ENCODE measurements at regions of chr19 and their contacts with region 1.

Region 1: GRCh38 chr19:41206926-41207750 is 11.9 kb upstream of the AXL start:
- DNase-seq: peak; percentile 45 to 51
- ATAC-seq: peak; percentile 17

Region 2: GRCh38 chr19:41161903-41162302 is 45.2 kb before region 1 on chr19:
- intact Hi-C with region 1: no loop called
- DNase-seq: no peak
- ATAC-seq: no peak

Region 3: GRCh38 chr19:41233748-41234240 is 26.7 kb after region 1 on chr19:
- intact Hi-C with region 1: no loop called
- DNase-seq: peak in 1 of 2 donors; percentile 51
- ATAC-seq: peak; percentile 38

Region 4: DNA sequence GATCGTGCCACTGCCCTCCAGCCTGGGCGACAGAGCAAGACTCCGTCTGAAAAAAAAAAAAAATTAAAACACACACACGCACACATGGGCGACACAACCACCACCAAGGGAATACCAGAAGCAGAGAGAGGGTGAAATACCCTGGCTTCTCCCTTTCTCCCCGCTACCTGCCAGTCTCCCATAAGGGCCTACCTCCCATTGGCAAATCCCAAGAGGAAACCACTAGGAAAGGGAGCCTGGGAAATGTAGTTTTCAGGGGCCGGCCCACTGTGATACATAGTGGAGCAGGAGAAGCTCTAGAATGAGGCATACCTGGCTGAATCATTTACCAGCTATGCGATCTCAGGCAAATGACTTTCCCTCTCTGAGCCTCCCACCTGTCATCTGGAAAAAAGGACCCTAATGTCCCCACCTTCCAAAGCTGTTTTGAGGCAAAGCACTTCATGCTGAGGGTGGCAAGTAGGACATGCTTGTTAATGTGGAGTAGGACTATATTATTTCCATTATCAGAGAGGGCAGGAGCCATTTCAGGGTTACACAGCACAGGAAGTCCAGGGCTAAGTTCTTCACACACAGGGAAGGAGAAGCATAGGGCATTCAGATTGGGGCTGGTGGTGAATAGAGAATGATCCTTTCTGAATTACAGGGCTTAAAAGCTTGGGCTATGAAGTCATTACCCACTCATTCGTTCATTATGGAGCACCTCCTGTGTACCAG is 42.7 kb after region 1 on chr19:
- intact Hi-C with region 1: loop called in 1 of 2 experiments (anchors 10 kb)
- DNase-seq: no peak
- ATAC-seq: no peak

Region 5: GRCh38 chr19:41263850-41264580 is 56.9 kb after region 1 on chr19 and contains the start of gene HNRNPUL1:
- intact Hi-C with region 1: loop called (anchors 5 to 10 kb)
- DNase-seq: peak; percentile 97 to 99
- ATAC-seq: peak; percentile 74
- total RNA-seq, gene HNRNPUL1: 162 to 172 TPM

Region 6: GRCh38 chr19:41308392-41309179 is 101.4 kb after region 1 on chr19:
- intact Hi-C with region 1: loop called in 1 of 2 experiments (anchors 10 kb)
- DNase-seq: peak; percentile 86 to 96
- ATAC-seq: peak; percentile 54

Measured in left colon (tissue), 2 donors.